A673 (cell line): ENCODE measurements at regions of chr22 and their contacts with region 1.

Region 1: DNA sequence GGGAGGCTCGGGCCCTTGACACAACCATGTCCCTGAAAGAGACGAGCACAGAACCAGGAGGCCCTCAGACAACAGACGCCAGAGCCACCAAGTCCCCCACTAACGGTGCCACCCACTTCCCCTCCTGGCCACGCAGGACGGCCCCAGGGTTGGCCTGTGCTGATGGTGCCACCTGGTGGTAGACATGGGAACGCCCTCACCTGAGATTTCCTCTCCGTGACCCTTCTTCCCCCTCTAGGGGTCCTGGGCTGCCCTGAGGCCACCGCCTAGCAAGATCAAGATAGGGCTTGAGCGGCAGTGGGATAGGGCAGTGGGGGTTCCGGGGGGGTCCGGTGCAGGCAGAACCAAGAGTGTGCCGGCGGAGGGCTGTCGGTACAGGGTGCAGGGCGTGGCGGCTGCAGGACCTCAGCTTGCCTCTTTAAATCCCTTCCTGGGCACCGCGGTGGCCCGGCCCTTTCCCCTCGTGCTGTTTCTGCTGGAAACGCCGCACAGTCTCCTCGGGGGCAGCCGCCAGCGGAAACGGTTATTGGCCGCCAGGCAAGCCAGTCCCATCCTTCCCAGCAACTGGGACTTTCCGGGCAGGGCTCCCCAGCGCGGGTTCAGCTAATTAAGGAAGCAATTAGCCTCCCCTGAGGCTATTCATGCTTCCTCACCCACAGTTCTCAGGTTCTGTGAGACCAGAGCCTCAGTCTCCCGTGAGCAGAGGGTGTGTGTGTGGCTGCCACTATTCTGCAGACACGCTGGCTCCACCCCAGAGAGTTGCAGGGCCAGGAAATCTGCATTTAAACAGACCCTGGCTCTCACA is 5.5 kb upstream of the NFAM1 start:
- DNase-seq: peak; percentile 92
- H3K4me3 ChIP-seq: peak overlapping the region; percentile 43
- H3K27ac ChIP-seq: peak overlapping the region; percentile 13
- H3K4me1 ChIP-seq: peaks cover 58% of the 10 kb centered on the region
- H3K27me3 ChIP-seq: no peaks in the 10 kb centered on the region
- CTCF ChIP-seq: peak; percentile 99

Region 2: DNA sequence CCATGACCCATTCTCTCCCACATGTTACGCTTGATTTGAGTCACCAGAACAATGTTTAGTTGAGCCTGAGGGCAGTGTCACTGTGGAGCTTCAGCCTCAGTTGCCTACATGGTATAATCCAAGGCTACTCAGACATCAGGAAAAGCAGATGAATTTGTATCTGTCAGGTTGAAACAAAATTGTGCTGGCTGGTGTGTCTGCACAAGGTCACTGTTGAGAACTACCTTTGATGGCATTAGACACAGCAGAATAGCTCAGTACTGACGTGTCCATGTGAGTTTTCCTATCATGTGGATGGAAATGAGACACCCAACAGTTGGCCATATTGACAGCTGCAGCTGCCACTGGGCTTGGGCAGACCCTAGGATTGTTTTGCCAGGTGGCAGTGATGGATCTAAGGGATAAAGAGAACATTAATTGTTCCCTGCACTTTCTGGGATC is 621.5 kb before region 1 on chr22:
- CTCF ChIA-PET with region 1: no interaction called
- POLR2A ChIA-PET with region 1: no interaction called
- intact Hi-C with region 1: no loop called
- DNase-seq: no peak
- H3K4me3 ChIP-seq: no peak overlapping the region
- H3K27ac ChIP-seq: no peak overlapping the region
- H3K4me1 ChIP-seq: peaks cover 6% of the 10 kb centered on the region
- H3K27me3 ChIP-seq: no peaks in the 10 kb centered on the region
- CTCF ChIP-seq: no peak

Region 3: GRCh38 chr22:41966607-41967240 is 471.0 kb before region 1 on chr22:
- CTCF ChIA-PET with region 1: no interaction called
- POLR2A ChIA-PET with region 1: no interaction called
- intact Hi-C with region 1: loop called (anchors 5 kb)
- DNase-seq: peak; percentile 79
- H3K4me3 ChIP-seq: no peak overlapping the region
- H3K27ac ChIP-seq: no peak overlapping the region
- H3K4me1 ChIP-seq: peaks cover 12% of the 10 kb centered on the region
- H3K27me3 ChIP-seq: no peaks in the 10 kb centered on the region
- CTCF ChIP-seq: peak; percentile 60

Region 4: GRCh38 chr22:42090596-42091454 is 346.9 kb before region 1 on chr22 and contains the start of gene NDUFA6:
- CTCF ChIA-PET with region 1: interaction called, 3 read pairs
- POLR2A ChIA-PET with region 1: no interaction called
- intact Hi-C with region 1: loop called (anchors 2 kb)
- DNase-seq: peak; percentile 100
- H3K4me3 ChIP-seq: peak within 1 kb of the TSS; percentile 74
- H3K27ac ChIP-seq: peak within 1 kb of the TSS; percentile 97
- H3K4me1 ChIP-seq: peaks cover 15% of the 10 kb centered on the region
- H3K27me3 ChIP-seq: no peaks in the 10 kb centered on the region
- CTCF ChIP-seq: peak; percentile 92
- total RNA-seq, gene NDUFA6: 138 and 166 TPM in 2 replicates

Region 5: GRCh38 chr22:42169055-42169469 is 268.6 kb before region 1 on chr22:
- CTCF ChIA-PET with region 1: interaction called, 3 read pairs
- POLR2A ChIA-PET with region 1: no interaction called
- intact Hi-C with region 1: loop called (anchors 1 kb)
- DNase-seq: peak; percentile 70
- H3K4me3 ChIP-seq: no peak overlapping the region
- H3K27ac ChIP-seq: no peak overlapping the region
- H3K4me1 ChIP-seq: peaks cover 24% of the 10 kb centered on the region
- H3K27me3 ChIP-seq: no peaks in the 10 kb centered on the region
- CTCF ChIP-seq: peak; percentile 77

Region 6: GRCh38 chr22:42277988-42278776 is 159.5 kb before region 1 on chr22:
- CTCF ChIA-PET with region 1: interaction called, 5 read pairs
- POLR2A ChIA-PET with region 1: no interaction called
- intact Hi-C with region 1: loop called (anchors 5 kb)
- DNase-seq: peak; percentile 60
- H3K4me3 ChIP-seq: no peak overlapping the region
- H3K27ac ChIP-seq: no peak overlapping the region
- H3K4me1 ChIP-seq: peaks cover 24% of the 10 kb centered on the region
- H3K27me3 ChIP-seq: no peaks in the 10 kb centered on the region
- CTCF ChIP-seq: peak; percentile 48

Region 7: DNA sequence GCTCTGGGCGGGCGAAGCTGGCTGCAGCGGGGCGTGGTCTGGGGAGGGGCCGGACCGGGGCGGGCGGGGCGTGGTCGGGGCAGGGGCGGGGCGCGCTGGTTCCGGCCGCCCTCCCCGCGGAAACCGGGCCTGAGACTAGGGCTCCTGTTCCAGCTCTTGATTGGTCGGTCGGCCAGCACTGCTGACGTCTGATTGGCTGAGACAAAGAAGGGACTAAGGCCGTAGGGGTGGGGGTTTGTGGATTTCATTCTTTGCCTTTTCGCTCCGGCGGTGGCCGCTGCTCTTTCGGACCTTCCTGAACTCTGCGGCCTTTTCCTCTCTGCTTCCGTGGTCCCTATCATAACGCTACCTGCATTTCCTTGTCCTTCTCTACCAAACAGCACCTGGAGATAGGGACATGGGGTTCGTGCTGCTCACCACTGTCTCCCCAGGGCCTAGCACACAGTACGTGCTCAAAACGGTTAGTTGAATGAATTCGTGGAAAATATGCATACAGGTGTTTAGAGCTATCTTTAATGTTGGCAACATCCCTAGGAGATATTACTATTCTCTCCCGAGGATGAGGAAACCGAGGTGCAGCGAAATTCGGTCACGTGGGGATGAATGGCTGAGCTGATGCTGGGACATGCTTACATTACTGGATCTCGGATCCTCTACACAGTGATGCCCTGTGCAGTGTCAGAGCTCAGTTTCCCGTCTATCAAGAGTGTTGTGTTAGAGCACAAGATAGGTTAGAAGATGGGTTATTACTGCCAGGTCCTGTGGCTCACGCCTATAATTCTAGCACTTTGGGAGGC is 68.2 kb before region 1 on chr22:
- CTCF ChIA-PET with region 1: interaction called, 6 read pairs
- POLR2A ChIA-PET with region 1: no interaction called
- intact Hi-C with region 1: loop called (anchors 5 kb)
- DNase-seq: peak; percentile 95
- H3K4me3 ChIP-seq: peak overlapping the region; percentile 65
- H3K27ac ChIP-seq: no peak overlapping the region
- H3K4me1 ChIP-seq: peaks cover 45% of the 10 kb centered on the region
- H3K27me3 ChIP-seq: peaks cover 5% of the 10 kb centered on the region
- CTCF ChIP-seq: no peak